HEK293 (cell line): ENCODE measurements at regions of chr7 and their contacts with region 1.

Region 1: DNA sequence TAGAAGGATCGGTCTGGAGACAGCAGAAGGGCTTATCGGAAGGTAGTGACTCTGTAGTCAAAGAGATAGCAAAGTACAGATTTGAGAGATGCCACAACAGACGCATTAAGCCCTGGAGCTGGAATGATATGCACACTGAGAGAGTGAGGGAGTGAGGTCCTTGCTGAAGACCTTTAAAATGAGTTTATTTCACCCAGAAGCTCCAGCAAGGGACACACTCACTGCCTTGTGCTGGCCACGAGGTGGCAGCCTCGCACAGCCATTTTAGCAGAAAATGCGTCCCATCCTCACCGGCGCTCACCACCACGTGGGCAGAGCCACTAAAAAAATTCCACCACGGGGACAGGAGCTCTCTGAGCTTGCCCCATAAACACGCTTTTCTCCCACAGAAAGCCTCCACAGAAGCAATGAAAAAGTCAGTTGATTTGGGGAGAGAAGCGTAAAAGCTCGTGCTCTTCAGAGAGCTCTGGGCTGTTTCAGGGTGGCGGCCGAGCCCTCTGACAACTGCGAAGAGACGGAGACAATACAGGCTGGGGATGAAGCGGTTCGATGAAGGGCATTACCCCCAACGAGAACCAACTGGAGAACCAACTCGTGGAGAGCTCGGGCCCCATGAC is 163.0 kb upstream of the KLF14 start:
- H3K4me3 ChIP-seq: no peak overlapping the region
- H3K27ac ChIP-seq: no peak overlapping the region
- H3K4me1 ChIP-seq: peaks cover 9% of the 10 kb centered on the region
- CTCF ChIP-seq: peak; percentile 70

Region 2: GRCh38 chr7:130875265-130875741 is 21.7 kb before region 1 on chr7:
- CTCF ChIA-PET with region 1: interaction called, 63 read pairs
- POLR2A ChIA-PET with region 1: no interaction called
- H3K4me3 ChIP-seq: no peak overlapping the region
- H3K27ac ChIP-seq: no peak overlapping the region
- H3K4me1 ChIP-seq: peaks cover 4% of the 10 kb centered on the region
- CTCF ChIP-seq: peak; percentile 70

Region 3: DNA sequence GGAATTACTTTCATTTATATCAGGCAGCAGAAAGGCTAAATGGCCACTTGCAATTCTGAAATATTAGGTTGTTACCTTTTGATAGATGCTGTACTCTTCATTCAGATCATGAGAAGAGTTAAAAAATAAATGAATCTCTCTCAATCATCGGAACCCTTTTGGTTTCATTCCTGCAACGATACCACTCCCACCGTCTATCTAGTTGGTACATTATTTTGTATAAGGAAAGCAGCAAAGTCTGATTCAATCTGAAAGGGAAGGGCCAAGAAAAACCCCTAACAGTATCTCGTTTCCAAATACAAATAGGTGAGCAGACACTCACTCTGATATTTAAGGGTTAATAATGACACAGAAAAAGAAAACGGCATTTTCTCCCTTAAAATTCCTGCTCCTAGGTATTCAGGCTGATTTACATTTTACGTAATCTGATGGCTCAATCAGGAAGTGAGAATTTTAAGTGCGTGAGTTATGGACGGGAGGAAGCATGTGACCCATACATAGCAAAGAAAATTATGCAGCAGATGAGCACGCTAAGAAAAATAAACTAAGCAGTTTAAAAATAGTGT is 46.4 kb after region 1 on chr7:
- CTCF ChIA-PET with region 1: interaction called, 12 read pairs
- POLR2A ChIA-PET with region 1: no interaction called
- H3K4me3 ChIP-seq: no peak overlapping the region
- H3K27ac ChIP-seq: no peak overlapping the region
- H3K4me1 ChIP-seq: 0 out of 2 replicates have a peak, but pooled peaks cover 3% of the 10 kb centered on the region
- CTCF ChIP-seq: no peak

Region 4: DNA sequence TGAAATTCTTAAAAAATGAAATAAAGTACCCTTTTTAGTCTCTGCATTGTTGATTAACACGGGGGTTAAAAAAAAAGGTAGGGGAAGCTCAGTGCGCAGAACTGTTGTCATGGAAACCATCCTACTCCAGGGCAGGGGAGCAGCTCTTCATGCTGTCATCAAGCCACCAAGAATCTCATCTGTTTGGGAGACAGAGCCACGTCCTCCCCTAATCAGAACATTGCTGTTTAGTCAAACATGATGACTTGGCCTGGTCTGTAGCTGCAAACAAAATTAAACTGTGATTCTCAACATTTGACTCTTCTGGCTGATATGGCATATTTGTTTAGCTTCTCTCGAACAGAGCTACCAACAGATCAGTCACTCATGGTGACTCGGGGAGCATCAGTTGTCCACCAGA is 91.4 kb after region 1 on chr7:
- CTCF ChIA-PET with region 1: interaction called, 76 read pairs
- POLR2A ChIA-PET with region 1: no interaction called
- H3K4me3 ChIP-seq: no peak overlapping the region
- H3K27ac ChIP-seq: no peak overlapping the region
- H3K4me1 ChIP-seq: no peaks in the 10 kb centered on the region; the same call in 1 of the 2 replicates
- CTCF ChIP-seq: no peak

Region 5: GRCh38 chr7:131007394-131008330 is 110.7 kb after region 1 on chr7:
- CTCF ChIA-PET with region 1: interaction called, 70 read pairs
- POLR2A ChIA-PET with region 1: no interaction called
- H3K4me3 ChIP-seq: no peak overlapping the region
- H3K27ac ChIP-seq: no peak overlapping the region
- H3K4me1 ChIP-seq: peaks cover 12% of the 10 kb centered on the region
- CTCF ChIP-seq: peak; percentile 82

Region 6: GRCh38 chr7:131040467-131040932 is 143.5 kb after region 1 on chr7:
- CTCF ChIA-PET with region 1: interaction called, 91 read pairs
- POLR2A ChIA-PET with region 1: interaction called, 3 read pairs
- H3K4me3 ChIP-seq: no peak overlapping the region
- H3K27ac ChIP-seq: no peak overlapping the region
- H3K4me1 ChIP-seq: peaks cover 3% of the 10 kb centered on the region; the same call in 1 of the 2 replicates
- CTCF ChIP-seq: peak; percentile 71; the same call in 1 of the 2 replicates

Region 7: GRCh38 chr7:131498237-131498885 is 601.4 kb after region 1 on chr7:
- CTCF ChIA-PET with region 1: no interaction called
- POLR2A ChIA-PET with region 1: no interaction called
- H3K4me3 ChIP-seq: no peak overlapping the region
- H3K27ac ChIP-seq: no peak overlapping the region
- H3K4me1 ChIP-seq: no peaks in the 10 kb centered on the region
- CTCF ChIP-seq: no peak